SK-N-SH (cell line): ENCODE measurements at regions of chr11 and their contacts with region 1.

Region 1: DNA sequence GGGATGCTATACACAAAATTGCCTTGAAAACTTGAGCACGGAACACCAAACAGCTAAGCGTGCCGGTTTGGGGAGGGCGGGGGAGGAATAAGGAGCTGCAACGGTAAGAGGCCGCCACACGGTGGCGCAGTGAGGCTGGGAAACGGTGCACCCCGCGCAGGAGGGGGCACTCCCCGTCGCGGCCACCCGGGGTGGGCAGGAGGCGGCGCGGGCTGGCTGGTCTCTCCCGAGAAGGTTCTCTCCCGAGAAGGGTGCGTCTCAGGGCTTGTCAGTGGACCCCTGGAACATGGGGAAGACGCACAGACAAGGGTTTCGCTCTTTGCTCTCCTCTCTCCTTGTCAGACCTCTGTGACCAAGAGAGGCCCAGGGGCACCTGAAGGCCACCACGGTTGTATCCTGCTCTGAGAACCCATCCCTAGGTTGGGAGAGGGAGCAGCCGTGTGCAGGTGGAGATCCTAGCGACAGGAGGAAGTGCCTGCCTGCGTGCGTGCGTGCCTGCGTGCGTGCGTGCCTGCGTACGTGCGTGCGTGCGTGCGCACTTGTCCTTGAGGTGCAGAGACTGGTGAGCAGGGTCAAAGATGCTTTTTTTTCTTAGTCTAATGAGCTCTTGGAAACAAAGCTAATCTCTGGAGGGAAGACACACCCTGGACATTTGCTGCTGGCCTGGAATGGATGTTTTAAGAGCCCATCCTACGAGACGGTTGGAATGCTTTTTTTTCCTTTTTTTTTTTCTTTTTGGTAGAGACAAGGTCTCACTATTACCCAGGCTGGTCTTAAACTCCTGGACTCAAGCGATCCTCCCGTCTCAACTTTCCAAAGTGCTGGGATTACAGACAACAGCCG is 18.1 kb upstream of the JAM3 start:
- DNase-seq: peak; percentile 96
- H3K4me3 ChIP-seq: peak overlapping the region; percentile 26 to 44; a peak in 3 of 4 replicates
- H3K27ac ChIP-seq: no peak overlapping the region
- H3K4me1 ChIP-seq: peaks cover 0 to 18% of the 10 kb centered on the region in 2 experiments; a peak in 1 of 4 replicates
- H3K27me3 ChIP-seq: no peaks in the 10 kb centered on the region
- CTCF ChIP-seq: peak; percentile 92
- EP300 ChIP-seq: no peak
- RAD21 ChIP-seq: peak; percentile 93

Region 2: GRCh38 chr11:133947321-133947756 is 103.4 kb before region 1 on chr11:
- CTCF ChIA-PET with region 1: interaction called, 72 read pairs
- POLR2A ChIA-PET with region 1: interaction called, 20 read pairs
- DNase-seq: peak; percentile 77
- H3K4me3 ChIP-seq: peak overlapping the region in 1 of 2 experiments; percentile 15; a peak in 1 of 4 replicates
- H3K27ac ChIP-seq: peak overlapping the region in 1 of 2 experiments; percentile 89; a peak in 2 of 4 replicates
- H3K4me1 ChIP-seq: peaks cover 0 to 100% of the 10 kb centered on the region in 2 experiments; a peak in 1 of 4 replicates
- H3K27me3 ChIP-seq: no peaks in the 10 kb centered on the region; the same call in 1 of the 2 replicates
- CTCF ChIP-seq: peak; percentile 53
- EP300 ChIP-seq: no peak
- RAD21 ChIP-seq: peak; percentile 61

Region 3: GRCh38 chr11:133993107-133993506 is 57.7 kb before region 1 on chr11:
- CTCF ChIA-PET with region 1: no interaction called
- POLR2A ChIA-PET with region 1: no interaction called
- DNase-seq: no peak
- H3K4me3 ChIP-seq: no peak overlapping the region
- H3K27ac ChIP-seq: no peak overlapping the region
- H3K4me1 ChIP-seq: peaks cover 0 to 20% of the 10 kb centered on the region in 2 experiments; a peak in 1 of 4 replicates
- H3K27me3 ChIP-seq: no peaks in the 10 kb centered on the region; the same call in 1 of the 2 replicates
- CTCF ChIP-seq: no peak
- EP300 ChIP-seq: no peak
- RAD21 ChIP-seq: no peak

Region 4: GRCh38 chr11:134014511-134014910 is 36.3 kb before region 1 on chr11:
- CTCF ChIA-PET with region 1: interaction called, 12 read pairs
- POLR2A ChIA-PET with region 1: no interaction called
- DNase-seq: peak; percentile 70
- H3K4me3 ChIP-seq: no peak overlapping the region; a peak in 1 of 4 replicates
- H3K27ac ChIP-seq: no peak overlapping the region
- H3K4me1 ChIP-seq: no peaks in the 10 kb centered on the region
- H3K27me3 ChIP-seq: no peaks in the 10 kb centered on the region; the same call in 1 of the 2 replicates
- CTCF ChIP-seq: peak; percentile 24; the same call in 1 of the 2 replicates
- EP300 ChIP-seq: no peak
- RAD21 ChIP-seq: peak; percentile 73

Region 5: DNA sequence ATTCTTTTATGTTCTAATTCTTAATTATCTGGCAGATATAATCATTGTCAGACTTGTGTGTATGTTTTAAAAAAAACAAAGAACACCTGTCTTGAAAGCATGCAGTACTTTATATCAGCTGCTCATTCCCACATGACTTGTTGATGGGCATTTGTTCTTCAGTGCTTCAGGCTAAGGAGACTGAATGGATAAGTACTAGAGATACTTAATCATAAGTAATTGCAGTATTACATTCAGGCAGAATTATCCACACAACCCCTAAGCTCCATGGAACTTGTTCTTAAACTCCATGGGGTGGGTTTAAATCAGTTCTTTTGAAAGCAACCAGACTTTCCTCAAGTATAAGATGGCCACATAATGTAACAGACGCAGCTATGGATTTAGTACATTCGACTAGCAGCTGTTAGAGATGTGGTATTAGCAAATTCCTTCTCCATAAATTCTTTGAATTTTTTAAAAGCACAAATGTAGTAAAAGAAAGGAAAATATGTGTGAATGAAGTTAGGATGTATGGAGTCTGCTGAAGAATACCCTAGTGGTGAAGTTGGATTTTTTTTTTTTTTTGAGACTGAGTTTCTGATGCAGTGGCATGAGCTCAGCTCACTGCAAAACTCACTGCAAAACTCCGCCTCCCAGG is 21.1 kb after region 1 on chr11:
- CTCF ChIA-PET with region 1: interaction called, 25 read pairs
- POLR2A ChIA-PET with region 1: interaction called, 3 read pairs
- DNase-seq: no peak
- H3K4me3 ChIP-seq: no peak overlapping the region
- H3K27ac ChIP-seq: no peak overlapping the region
- H3K4me1 ChIP-seq: peaks cover 0 to 13% of the 10 kb centered on the region in 2 experiments; a peak in 2 of 4 replicates
- H3K27me3 ChIP-seq: 0 out of 2 replicates have a peak, but pooled peaks cover 5% of the 10 kb centered on the region
- CTCF ChIP-seq: peak; percentile 35
- EP300 ChIP-seq: no peak
- RAD21 ChIP-seq: no peak

Region 6: GRCh38 chr11:134134167-134134566 is 83.4 kb after region 1 on chr11:
- CTCF ChIA-PET with region 1: interaction called, 82 read pairs
- POLR2A ChIA-PET with region 1: interaction called, 5 read pairs
- DNase-seq: no peak
- H3K4me3 ChIP-seq: no peak overlapping the region
- H3K27ac ChIP-seq: no peak overlapping the region
- H3K4me1 ChIP-seq: no peaks in the 10 kb centered on the region; a peak in 1 of 4 replicates
- H3K27me3 ChIP-seq: no peaks in the 10 kb centered on the region
- CTCF ChIP-seq: no peak
- EP300 ChIP-seq: no peak
- RAD21 ChIP-seq: no peak